HepG2 (cell line): ENCODE measurements at regions of chr12 and their contacts with region 1.

Region 1: DNA sequence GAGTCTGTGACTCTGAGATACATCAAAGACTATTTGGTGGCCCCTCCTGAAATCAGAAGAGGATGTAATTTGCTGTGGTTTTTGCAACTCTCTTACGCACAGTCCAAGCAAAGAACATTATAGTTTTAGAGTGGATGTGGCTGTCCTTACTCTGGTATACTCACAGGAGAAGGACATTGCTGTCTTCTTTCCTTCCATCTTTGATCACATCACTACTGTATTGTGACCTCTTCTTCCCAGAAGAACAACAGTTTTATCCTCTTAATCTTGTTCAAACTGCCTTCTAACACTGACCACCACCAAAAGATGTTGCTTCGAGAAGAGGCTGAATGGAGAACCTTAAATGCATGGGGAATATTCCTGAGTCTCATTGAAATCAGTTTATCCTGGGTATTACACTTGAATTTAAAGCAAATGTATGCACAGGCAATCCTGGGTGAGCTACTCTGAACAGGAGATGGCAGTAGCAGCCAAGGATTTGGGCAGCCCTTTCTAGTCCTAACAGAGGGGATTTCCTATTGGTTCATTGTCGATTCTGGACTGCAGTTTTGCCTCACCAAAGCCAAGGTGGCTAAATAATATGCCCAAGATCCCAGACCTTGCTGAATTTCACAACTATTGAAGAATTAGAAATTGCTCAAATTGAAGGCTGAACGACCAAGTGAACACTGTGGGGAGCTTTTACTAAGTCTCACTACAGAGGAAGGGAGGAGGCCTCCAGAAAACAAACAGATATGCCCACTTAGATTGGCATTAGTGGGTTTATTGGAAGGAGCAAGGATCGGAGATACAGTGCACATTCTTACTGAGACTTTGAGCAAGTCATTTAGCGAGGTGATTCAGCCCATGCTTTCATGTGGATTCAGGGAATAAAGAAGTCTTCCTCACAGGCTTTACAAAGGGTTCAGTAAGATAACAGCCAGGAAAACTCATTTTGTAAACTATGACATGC is 282.8 kb downstream of the PAWR start:
- DNase-seq: peak; percentile 74
- ATAC-seq: peak; percentile 100
- H3K4me3 ChIP-seq: no peak overlapping the region
- H3K27ac ChIP-seq: no peak overlapping the region
- H3K4me1 ChIP-seq: peaks cover 8% of the 10 kb centered on the region; the same call in 1 of the 2 replicates
- H3K27me3 ChIP-seq: no peaks in the 10 kb centered on the region
- CTCF ChIP-seq: peak; percentile 89
- EP300 ChIP-seq: no peak
- POLR2A ChIP-seq: no peak
- RAD21 ChIP-seq: peak; percentile 81

Region 2: GRCh38 chr12:78970041-78970440 is 437.9 kb before region 1 on chr12:
- CTCF ChIA-PET with region 1: no interaction called
- POLR2A ChIA-PET with region 1: no interaction called
- in situ Hi-C with region 1: no loop called
- intact Hi-C with region 1: no loop called
- DNase-seq: no peak
- ATAC-seq: no peak
- H3K4me3 ChIP-seq: no peak overlapping the region
- H3K27ac ChIP-seq: no peak overlapping the region
- H3K4me1 ChIP-seq: no peaks in the 10 kb centered on the region
- H3K27me3 ChIP-seq: no peaks in the 10 kb centered on the region
- CTCF ChIP-seq: no peak
- EP300 ChIP-seq: no peak
- POLR2A ChIP-seq: no peak
- RAD21 ChIP-seq: no peak

Region 3: DNA sequence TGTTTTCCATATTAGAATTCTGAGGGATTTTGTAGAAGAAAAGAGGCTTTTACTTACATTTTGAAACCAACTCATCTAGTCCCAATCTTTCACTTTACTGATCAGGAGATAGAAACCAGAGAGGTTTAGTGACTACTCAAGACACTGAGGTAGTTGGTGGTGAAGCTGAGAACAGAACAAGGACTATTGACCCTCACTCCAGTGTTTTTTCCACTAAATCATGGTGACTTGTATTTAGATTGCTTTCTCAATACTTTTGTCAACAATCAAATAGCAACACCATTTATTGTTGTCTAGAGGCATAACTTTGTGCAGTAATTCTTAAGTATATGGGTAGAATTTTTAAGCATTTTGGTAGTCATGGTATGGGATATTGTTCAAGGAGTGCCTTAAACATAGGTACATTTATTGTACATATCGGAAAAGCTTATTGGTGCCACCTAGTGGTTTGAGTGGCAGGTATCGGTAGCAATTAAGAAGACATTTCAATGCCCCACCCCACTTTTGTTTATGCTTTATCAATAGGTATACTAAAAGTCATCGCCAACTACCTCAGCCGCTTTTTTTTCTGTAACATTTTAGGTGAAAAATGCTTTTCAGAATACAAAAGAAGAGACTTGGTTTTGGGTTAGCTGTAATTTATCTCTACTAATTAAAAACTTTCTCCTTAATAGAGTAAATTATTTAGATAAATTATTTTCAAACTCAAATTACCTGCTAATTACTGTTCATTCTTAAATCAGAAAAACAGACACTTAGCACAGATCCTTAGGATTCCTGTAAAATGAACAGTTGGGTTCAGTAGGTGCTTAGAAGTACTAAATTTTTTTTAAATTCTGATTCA is 330.1 kb after region 1 on chr12:
- CTCF ChIA-PET with region 1: interaction called, 14 read pairs
- POLR2A ChIA-PET with region 1: no interaction called
- in situ Hi-C with region 1: loop called (anchors 5 kb)
- intact Hi-C with region 1: loop called (anchors 1 kb)
- DNase-seq: peak; percentile 68
- ATAC-seq: peak; percentile 84
- H3K4me3 ChIP-seq: no peak overlapping the region
- H3K27ac ChIP-seq: no peak overlapping the region
- H3K4me1 ChIP-seq: peaks cover 6% of the 10 kb centered on the region
- H3K27me3 ChIP-seq: no peaks in the 10 kb centered on the region
- CTCF ChIP-seq: peak; percentile 77
- EP300 ChIP-seq: no peak
- POLR2A ChIP-seq: no peak
- RAD21 ChIP-seq: peak; percentile 46; the same call in 1 of the 2 replicates

Region 4: GRCh38 chr12:79997096-79997791 is 589.3 kb after region 1 on chr12:
- CTCF ChIA-PET with region 1: no interaction called
- POLR2A ChIA-PET with region 1: no interaction called
- in situ Hi-C with region 1: loop called (anchors 10 kb)
- intact Hi-C with region 1: loop called (anchors 5 kb)
- DNase-seq: no peak
- ATAC-seq: no peak
- H3K4me3 ChIP-seq: no peak overlapping the region
- H3K27ac ChIP-seq: no peak overlapping the region
- H3K4me1 ChIP-seq: no peaks in the 10 kb centered on the region; the same call in 1 of the 2 replicates
- H3K27me3 ChIP-seq: no peaks in the 10 kb centered on the region
- CTCF ChIP-seq: no peak
- EP300 ChIP-seq: no peak
- POLR2A ChIP-seq: no peak
- RAD21 ChIP-seq: no peak

Region 5: GRCh38 chr12:80186727-80187217 is 778.8 kb after region 1 on chr12:
- CTCF ChIA-PET with region 1: no interaction called
- POLR2A ChIA-PET with region 1: no interaction called
- in situ Hi-C with region 1: loop called (anchors 10 kb)
- intact Hi-C with region 1: loop called (anchors 1 kb)
- DNase-seq: peak; percentile 82
- ATAC-seq: peak; percentile 95
- H3K4me3 ChIP-seq: no peak overlapping the region
- H3K27ac ChIP-seq: no peak overlapping the region
- H3K4me1 ChIP-seq: peaks cover 4% of the 10 kb centered on the region; the same call in 1 of the 2 replicates
- H3K27me3 ChIP-seq: no peaks in the 10 kb centered on the region
- CTCF ChIP-seq: peak; percentile 85
- EP300 ChIP-seq: no peak
- POLR2A ChIP-seq: no peak
- RAD21 ChIP-seq: peak; percentile 61; the same call in 1 of the 2 replicates

Region 6: GRCh38 chr12:80269803-80270552 is 862.0 kb after region 1 on chr12:
- CTCF ChIA-PET with region 1: interaction called, 7 read pairs
- POLR2A ChIA-PET with region 1: no interaction called
- in situ Hi-C with region 1: loop called (anchors 5 kb)
- intact Hi-C with region 1: loop called (anchors 1 kb)
- DNase-seq: peak; percentile 24
- ATAC-seq: peak; percentile 77
- H3K4me3 ChIP-seq: no peak overlapping the region
- H3K27ac ChIP-seq: no peak overlapping the region
- H3K4me1 ChIP-seq: no peaks in the 10 kb centered on the region
- H3K27me3 ChIP-seq: no peaks in the 10 kb centered on the region
- CTCF ChIP-seq: peak; percentile 68
- EP300 ChIP-seq: no peak
- POLR2A ChIP-seq: no peak
- RAD21 ChIP-seq: no peak